PC-3 (cell line): ENCODE measurements at regions of chr16 and their contacts with region 1.

Region 1: DNA sequence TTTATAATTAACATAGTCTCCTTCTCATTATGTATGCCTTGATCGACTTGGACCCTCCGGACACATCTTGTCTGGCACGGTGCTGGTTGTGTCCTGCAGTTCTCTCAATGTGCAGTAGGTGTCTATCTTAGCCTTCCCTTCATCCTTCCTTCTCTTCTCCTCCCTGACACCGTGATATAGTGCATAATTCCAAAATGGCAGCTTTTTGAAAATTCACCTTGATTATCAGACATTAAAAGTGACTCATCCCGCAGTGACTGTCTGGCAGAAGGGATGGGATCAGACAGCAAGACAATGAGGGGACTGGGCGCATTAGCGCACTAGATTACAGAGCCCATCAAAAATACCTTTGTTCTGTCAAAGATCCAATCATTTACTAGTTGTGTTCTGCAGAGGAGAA is 70.0 kb upstream of the PMFBP1 start:
- DNase-seq: peak; percentile 62
- ATAC-seq: peak; percentile 87
- H3K4me3 ChIP-seq: no peak overlapping the region
- H3K27ac ChIP-seq: no peak overlapping the region
- H3K4me1 ChIP-seq: peaks cover 2% of the 10 kb centered on the region; the same call in 1 of the 2 replicates
- H3K27me3 ChIP-seq: no peaks in the 10 kb centered on the region
- CTCF ChIP-seq: peak; percentile 73

Region 2: GRCh38 chr16:72124761-72125634 is 116.9 kb before region 1 on chr16:
- CTCF ChIA-PET with region 1: no interaction called
- POLR2A ChIA-PET with region 1: no interaction called
- intact Hi-C with region 1: loop called (anchors 2 kb)
- DNase-seq: peak; percentile 61
- ATAC-seq: peak; percentile 86
- H3K4me3 ChIP-seq: no peak overlapping the region
- H3K27ac ChIP-seq: no peak overlapping the region
- H3K4me1 ChIP-seq: no peaks in the 10 kb centered on the region
- H3K27me3 ChIP-seq: no peaks in the 10 kb centered on the region
- CTCF ChIP-seq: peak; percentile 76

Region 3: DNA sequence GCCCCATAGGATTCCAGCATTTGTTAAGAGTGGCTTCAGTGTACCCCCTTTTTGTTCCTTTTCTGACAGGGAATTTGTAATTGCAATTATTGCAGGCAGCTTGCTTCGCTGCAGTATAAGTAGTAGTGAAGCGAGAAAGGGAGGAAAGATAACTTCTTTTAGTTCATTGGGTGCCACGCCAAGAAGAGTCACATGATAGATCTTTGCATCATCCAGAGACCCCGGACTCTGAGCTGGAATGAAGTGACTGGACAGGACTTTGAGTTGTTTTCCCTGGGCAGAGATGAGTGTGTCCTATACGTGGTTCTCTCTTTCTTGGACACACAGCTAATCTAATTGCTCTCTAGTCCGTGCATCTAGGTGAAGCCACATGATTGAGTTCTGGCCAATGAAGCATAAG is 25.2 kb before region 1 on chr16:
- CTCF ChIA-PET with region 1: no interaction called
- POLR2A ChIA-PET with region 1: no interaction called
- intact Hi-C with region 1: no loop called
- DNase-seq: no peak
- ATAC-seq: no peak
- H3K4me3 ChIP-seq: no peak overlapping the region
- H3K27ac ChIP-seq: no peak overlapping the region
- H3K4me1 ChIP-seq: no peaks in the 10 kb centered on the region
- H3K27me3 ChIP-seq: no peaks in the 10 kb centered on the region
- CTCF ChIP-seq: no peak